ENCODE measurements at regions of chr7 and their contacts with region 1.

Region 1: DNA sequence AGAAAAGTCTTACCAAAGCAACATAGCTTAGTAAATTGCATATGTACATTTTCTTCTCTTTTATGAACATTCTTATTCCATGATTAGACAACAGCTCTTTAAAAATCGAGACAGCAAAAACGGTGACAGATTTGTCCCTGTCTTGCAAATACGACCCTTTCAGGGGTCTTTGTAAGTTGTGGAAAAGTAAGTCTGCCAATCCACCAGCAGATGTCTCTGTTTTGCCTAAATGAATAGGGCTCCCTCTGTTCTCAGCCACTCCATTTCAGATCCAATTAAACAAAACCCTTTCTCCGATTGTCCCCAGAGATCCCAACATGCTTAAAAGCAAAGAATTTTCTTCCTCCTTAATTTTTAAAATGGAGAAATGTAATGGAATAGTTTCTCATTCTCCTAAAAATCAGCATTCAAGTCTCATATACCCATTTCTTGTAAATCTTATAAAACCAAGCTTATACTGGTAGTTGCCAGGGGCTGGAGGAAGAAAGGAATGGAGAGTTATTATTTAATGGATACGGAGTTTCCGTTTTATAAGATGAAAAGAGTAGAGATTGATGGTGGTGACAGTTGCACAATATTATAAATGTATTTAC is 61.0 kb upstream of the NFE2L3 start:
- DNase-seq: no peak
- ATAC-seq: peak; percentile 66
- H3K4me3 Mint-ChIP-seq: peak overlapping the region; percentile 34
- H3K27ac Mint-ChIP-seq: peak overlapping the region; percentile 69
- H3K4me1 Mint-ChIP-seq: peaks cover 23% of the 10 kb centered on the region
- H3K27me3 Mint-ChIP-seq: no peaks in the 10 kb centered on the region

Region 2: DNA sequence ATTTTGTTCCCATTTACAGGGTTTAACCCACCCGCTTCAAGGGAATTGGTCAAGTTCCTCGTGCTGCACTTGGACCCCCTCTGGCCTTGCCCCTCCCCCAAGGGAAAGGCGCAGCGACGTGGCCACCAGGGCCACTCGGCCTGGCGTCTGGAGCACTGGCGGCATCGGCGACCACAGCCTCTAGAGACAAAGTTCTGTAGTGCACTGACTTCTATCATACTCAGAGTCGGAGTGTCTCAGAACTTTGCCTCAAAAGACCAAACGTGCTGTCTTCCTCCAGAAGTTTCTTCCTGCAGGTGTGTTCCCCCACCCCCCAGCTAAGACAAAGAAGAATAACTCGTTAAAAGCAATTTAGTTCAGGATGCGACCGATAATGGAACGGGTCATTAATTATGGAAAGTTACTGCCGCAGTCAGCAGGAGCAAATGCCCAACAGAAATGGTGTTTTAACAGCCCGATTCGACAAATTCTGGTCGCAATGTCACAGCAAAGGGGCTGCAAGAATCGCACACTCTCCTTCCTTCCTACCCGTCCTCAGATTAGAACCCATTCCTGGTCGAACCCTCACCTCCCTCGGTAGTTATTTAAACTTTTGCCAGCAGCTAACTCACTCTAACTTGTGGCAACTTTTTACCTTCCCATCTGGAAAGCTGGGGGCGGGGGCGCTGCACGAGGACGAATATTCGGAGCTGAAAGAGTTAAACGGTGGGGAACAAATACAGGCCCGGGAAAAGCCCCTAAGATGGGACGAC is 141.1 kb before region 1 on chr7:
- CTCF ChIA-PET with region 1: no interaction called
- DNase-seq: no peak
- ATAC-seq: no peak
- H3K4me3 Mint-ChIP-seq: peak overlapping the region; percentile 77
- H3K27ac Mint-ChIP-seq: no peak overlapping the region
- H3K4me1 Mint-ChIP-seq: peaks cover 7% of the 10 kb centered on the region
- H3K27me3 Mint-ChIP-seq: peaks cover 30% of the 10 kb centered on the region

Region 3: DNA sequence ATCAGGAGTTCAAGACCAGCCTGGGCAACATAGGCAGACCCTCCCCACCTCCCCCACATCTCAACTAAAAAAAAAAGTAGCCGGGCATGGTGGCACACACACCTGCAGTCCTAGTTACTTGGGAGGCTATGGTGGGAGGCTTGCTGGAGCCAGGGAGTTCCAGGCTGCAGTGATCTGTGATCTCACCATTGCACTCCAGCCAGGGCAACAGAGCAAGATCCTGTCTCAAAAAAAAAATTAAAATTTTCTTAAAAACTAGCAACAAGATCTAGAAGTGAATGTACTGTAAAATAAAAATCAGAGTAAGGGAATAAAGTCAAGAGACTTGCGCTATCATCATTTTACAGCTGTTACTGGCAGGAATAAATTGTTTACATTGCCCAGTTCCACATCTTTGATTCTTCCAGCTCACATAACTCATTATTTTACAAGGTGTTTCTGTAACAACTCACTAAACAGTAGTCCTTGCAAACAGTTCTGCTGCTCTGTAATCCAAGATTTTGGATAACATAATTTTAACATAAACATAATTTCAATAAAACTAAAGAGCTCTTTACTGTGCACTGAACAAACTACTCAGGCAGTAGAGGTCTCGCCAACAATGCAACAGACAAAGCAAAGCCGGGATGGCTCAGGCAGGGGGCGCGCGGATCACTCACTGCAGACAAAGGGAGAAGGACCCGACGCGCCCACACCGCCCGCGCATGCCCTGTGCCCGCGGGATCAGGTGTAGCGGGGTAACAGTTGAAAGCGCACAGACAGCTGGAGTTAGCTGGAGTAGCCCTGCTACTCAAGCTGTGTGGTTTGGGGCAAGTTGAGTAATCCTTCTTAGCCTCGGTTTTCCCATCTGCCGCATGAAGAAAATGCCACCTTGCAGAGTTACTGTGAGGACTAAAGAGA is 12.3 kb before region 1 on chr7:
- CTCF ChIA-PET with region 1: interaction called, 14 read pairs
- DNase-seq: peak; percentile 85
- ATAC-seq: peak; percentile 99
- H3K4me3 Mint-ChIP-seq: no peak overlapping the region
- H3K27ac Mint-ChIP-seq: no peak overlapping the region
- H3K4me1 Mint-ChIP-seq: peaks cover 8% of the 10 kb centered on the region
- H3K27me3 Mint-ChIP-seq: peaks cover 73% of the 10 kb centered on the region

Region 4: GRCh38 chr7:26180792-26181198 is 89.8 kb after region 1 on chr7:
- CTCF ChIA-PET with region 1: interaction called, 17 read pairs
- DNase-seq: no peak
- ATAC-seq: no peak
- H3K4me3 Mint-ChIP-seq: no peak overlapping the region
- H3K27ac Mint-ChIP-seq: peak overlapping the region; percentile 29
- H3K4me1 Mint-ChIP-seq: peaks cover 39% of the 10 kb centered on the region
- H3K27me3 Mint-ChIP-seq: no peaks in the 10 kb centered on the region

Region 5: GRCh38 chr7:26193432-26194207 is 102.6 kb after region 1 on chr7:
- CTCF ChIA-PET with region 1: interaction called, 34 read pairs
- DNase-seq: no peak
- ATAC-seq: peak; percentile 29
- H3K4me3 Mint-ChIP-seq: peak overlapping the region; percentile 100
- H3K27ac Mint-ChIP-seq: peak overlapping the region; percentile 86
- H3K4me1 Mint-ChIP-seq: peaks cover 77% of the 10 kb centered on the region
- H3K27me3 Mint-ChIP-seq: no peaks in the 10 kb centered on the region

Region 6: DNA sequence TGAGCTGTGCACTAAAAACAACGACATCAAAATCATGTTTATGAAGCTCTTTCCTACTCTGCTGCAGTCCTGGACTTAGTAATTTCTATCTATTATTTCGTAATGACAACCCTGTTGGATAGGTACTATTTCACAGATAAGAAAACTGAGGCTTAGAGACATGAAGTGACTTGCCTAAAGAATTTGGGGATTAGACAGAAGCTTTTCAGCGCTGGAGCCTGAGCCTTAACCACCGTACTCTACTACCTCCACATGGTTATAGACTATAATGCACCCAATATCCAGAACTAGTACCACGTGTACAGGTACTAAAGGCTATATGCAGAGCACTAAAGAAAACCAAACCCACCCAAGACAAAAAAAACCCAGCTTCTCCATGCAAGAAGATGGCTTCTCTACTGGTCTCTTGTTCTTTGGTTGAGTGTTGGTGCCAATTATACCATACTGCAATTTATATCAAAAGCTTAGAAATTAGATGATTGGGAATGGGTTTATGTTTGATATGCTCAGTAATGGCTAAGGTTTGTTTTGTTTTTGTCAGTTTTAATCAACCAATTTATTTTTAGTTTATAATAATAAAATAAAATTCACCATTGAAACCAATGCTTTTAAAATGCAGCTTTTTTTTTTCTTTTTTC is 194.1 kb after region 1 on chr7:
- CTCF ChIA-PET with region 1: interaction called, 18 read pairs
- DNase-seq: no peak
- ATAC-seq: peak; percentile 94
- H3K4me3 Mint-ChIP-seq: no peak overlapping the region
- H3K27ac Mint-ChIP-seq: no peak overlapping the region
- H3K4me1 Mint-ChIP-seq: peaks cover 5% of the 10 kb centered on the region
- H3K27me3 Mint-ChIP-seq: no peaks in the 10 kb centered on the region

Measured in activated CD8-positive, alpha-beta memory T cell treated with anti-CD3 and anti-CD28 coated beads, Interleukin-2, amount 10 ng/mL, durations not matched to agents 7 days and 5 days (primary cell).